B cell (primary cell): ENCODE measurements at regions of chr19 and their contacts with region 1.

Region 1: GRCh38 chr19:18364826-18365528 is 21.0 kb upstream of the GDF15 start:
- DNase-seq: no peak
- ATAC-seq: no peak
- H3K4me3 ChIP-seq: no peak overlapping the region
- H3K4me3 Mint-ChIP-seq: no peak overlapping the region
- H3K27ac ChIP-seq: no peak overlapping the region
- H3K27ac Mint-ChIP-seq: no peak overlapping the region
- H3K4me1 ChIP-seq: no peaks in the 10 kb centered on the region
- H3K4me1 Mint-ChIP-seq: peaks cover 4% of the 10 kb centered on the region
- H3K27me3 ChIP-seq: no peaks in the 10 kb centered on the region
- H3K27me3 Mint-ChIP-seq: no peaks in the 10 kb centered on the region
- CTCF ChIP-seq: no peak

Region 2: DNA sequence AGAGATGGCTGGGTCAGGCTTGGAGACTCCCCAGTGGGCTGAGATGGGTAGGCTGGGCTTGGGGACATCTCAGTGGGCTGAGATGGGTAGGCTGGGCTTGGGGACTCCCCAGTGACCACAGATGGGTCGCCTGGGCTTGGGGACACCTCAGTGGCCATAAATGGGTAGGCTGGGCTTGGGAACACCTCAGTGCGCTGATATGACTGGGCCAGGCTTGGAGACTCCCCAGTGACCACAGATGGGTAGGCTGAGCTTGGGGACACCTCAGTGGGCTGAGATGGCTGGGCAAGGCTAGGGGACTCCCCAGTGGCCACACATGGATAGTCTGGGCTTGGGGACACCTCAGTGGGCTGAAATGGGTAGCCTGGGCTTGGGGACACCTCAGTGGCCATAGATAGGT is 103.5 kb before region 1 on chr19:
- CTCF ChIA-PET with region 1: no interaction called
- POLR2A ChIA-PET with region 1: interaction called, 11 read pairs
- intact Hi-C with region 1: no loop called
- DNase-seq: no peak
- ATAC-seq: no peak
- H3K4me3 ChIP-seq: no peak overlapping the region
- H3K4me3 Mint-ChIP-seq: no peak overlapping the region
- H3K27ac ChIP-seq: no peak overlapping the region
- H3K27ac Mint-ChIP-seq: no peak overlapping the region
- H3K4me1 ChIP-seq: no peaks in the 10 kb centered on the region
- H3K4me1 Mint-ChIP-seq: peaks cover 1% of the 10 kb centered on the region
- H3K27me3 ChIP-seq: no peaks in the 10 kb centered on the region
- H3K27me3 Mint-ChIP-seq: no peaks in the 10 kb centered on the region
- CTCF ChIP-seq: no peak

Region 3: GRCh38 chr19:18557474-18558201 is 192.7 kb after region 1 on chr19 and contains the start of gene KXD1:
- CTCF ChIA-PET with region 1: no interaction called
- POLR2A ChIA-PET with region 1: interaction called, 11 read pairs
- intact Hi-C with region 1: no loop called
- DNase-seq: peak; percentile 99
- ATAC-seq: peak; percentile 99
- H3K4me3 ChIP-seq: peak within 1 kb of the TSS; percentile 73 to 98 (median 93)
- H3K4me3 Mint-ChIP-seq: peak within 1 kb of the TSS; percentile 90
- H3K27ac ChIP-seq: peak within 1 kb of the TSS; percentile 82 to 97
- H3K27ac Mint-ChIP-seq: peak within 1 kb of the TSS; percentile 90
- H3K4me1 ChIP-seq: peaks cover 15 to 25% of the 10 kb centered on the region in 2 donors
- H3K4me1 Mint-ChIP-seq: peaks cover 21% of the 10 kb centered on the region
- H3K27me3 ChIP-seq: no peaks in the 10 kb centered on the region
- H3K27me3 Mint-ChIP-seq: no peaks in the 10 kb centered on the region
- CTCF ChIP-seq: no peak
- total RNA-seq, gene KXD1: 88.5 and 90.0 TPM in 2 replicates